Activated B cell treated with CpG ODN at 0.5 μM for 24 hours (primary cell): ENCODE measurements at regions of chr14 and their contacts with region 1.

Region 1: GRCh38 chr14:49620182-49621113 is at the starts of genes MGAT2 and RPL36AL:
- DNase-seq: peak; percentile 90
- ATAC-seq: peak; percentile 90
- H3K4me3 Mint-ChIP-seq: peak within 1 kb of the TSS; percentile 97
- H3K27ac Mint-ChIP-seq: peak within 1 kb of the TSS; percentile 97
- H3K4me1 Mint-ChIP-seq: peaks cover 61% of the 10 kb centered on the region
- H3K27me3 Mint-ChIP-seq: no peaks in the 10 kb centered on the region
- CTCF ChIP-seq: no peak
- total RNA-seq, gene MGAT2: 39.7 and 40.5 TPM in 2 replicates
- total RNA-seq, gene RPL36AL: 150 and 166 TPM in 2 replicates

Region 2: DNA sequence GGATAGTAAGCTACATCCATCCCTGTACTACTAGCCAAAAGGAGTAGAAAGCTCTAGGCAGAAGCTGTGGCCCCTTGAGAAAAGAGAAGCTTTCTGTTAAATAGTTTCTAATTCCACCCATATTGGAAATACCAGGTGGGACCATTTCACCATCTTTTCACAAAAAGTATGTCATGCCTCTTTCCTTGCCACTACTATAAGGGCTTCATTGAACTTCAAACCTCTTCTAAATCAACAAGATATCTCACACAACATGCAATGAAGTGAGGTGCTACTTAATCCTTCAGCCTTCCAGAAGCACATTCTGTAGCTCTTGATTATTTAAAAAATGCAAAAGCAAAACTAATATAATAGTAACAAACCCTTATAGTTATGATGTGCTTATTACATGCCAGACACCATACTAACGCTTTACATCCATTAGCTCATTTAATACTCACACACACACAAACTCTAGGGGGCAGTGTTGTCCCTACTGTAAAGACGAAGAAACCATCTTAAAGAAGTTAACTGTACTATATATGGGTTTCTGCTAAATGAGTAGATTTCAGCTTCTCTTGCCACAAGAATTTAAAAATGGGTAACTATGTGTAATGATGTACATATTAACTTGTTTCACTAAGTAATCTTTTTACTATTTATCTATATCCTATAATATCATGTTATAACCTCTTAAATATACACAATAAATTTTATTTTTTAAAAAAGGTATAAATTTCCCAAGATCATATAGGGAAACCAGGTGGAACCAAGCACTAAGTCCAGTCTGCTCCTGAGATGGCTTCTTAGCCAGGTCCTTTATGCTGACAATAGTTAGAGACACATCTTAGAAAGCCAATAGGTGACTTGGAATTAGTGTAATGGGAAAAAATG is 158.7 kb before region 1 on chr14:
- CTCF ChIA-PET with region 1: interaction called, 12 read pairs
- POLR2A ChIA-PET with region 1: interaction called, 6 read pairs
- intact Hi-C with region 1: no loop called
- DNase-seq: no peak
- ATAC-seq: peak; percentile 81
- H3K4me3 Mint-ChIP-seq: no peak overlapping the region
- H3K27ac Mint-ChIP-seq: no peak overlapping the region
- H3K4me1 Mint-ChIP-seq: no peaks in the 10 kb centered on the region
- H3K27me3 Mint-ChIP-seq: peaks cover 5% of the 10 kb centered on the region
- CTCF ChIP-seq: peak; percentile 62

Region 3: DNA sequence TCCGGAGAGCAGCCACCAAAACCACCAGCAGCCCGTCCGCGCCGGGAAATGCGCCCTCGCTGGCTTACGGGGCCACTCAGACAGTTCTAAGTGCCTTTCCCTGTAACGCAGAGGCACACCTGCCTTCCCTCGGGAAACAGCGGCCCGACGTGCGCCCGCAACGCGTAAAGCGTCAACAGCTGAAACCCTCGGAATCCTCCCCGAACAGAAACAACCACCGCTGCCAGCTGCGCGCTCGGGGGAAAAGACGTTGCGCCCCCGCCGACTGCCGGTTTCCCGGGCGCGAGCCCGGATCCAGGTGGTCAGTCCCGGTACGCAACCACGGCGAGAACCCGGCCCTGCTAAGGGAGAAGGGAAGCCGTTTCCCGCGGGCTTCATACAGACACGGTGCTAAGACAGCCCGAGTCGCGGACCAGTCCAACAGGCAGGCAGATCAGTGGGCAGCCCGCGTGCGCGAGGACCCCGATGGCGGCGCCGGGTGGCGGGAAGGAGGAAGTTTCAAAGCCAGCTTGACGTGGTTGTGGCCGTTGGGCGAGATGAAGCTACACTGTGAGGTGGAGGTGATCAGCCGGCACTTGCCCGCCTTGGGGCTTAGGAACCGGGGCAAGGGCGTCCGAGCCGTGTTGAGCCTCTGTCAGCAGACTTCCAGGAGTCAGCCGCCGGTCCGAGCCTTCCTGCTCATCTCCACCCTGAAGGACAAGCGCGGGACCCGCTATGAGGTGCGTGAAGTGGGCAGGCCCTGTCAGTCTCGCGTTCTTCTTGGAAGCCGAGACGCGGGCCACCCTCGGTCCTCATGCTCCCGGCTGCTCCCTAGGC is 21.8 kb before region 1 on chr14 and contains the start of gene LRR1:
- CTCF ChIA-PET with region 1: interaction called, 15 read pairs
- POLR2A ChIA-PET with region 1: interaction called, 293 read pairs
- intact Hi-C with region 1: loop called (anchors 1 kb)
- DNase-seq: peak; percentile 94
- ATAC-seq: peak; percentile 67
- H3K4me3 Mint-ChIP-seq: peak within 1 kb of the TSS; percentile 95
- H3K27ac Mint-ChIP-seq: peak within 1 kb of the TSS; percentile 96
- H3K4me1 Mint-ChIP-seq: peaks cover 60% of the 10 kb centered on the region
- H3K27me3 Mint-ChIP-seq: no peaks in the 10 kb centered on the region
- CTCF ChIP-seq: no peak
- total RNA-seq, gene LRR1: 15.1 and 19.9 TPM in 2 replicates

Region 4: DNA sequence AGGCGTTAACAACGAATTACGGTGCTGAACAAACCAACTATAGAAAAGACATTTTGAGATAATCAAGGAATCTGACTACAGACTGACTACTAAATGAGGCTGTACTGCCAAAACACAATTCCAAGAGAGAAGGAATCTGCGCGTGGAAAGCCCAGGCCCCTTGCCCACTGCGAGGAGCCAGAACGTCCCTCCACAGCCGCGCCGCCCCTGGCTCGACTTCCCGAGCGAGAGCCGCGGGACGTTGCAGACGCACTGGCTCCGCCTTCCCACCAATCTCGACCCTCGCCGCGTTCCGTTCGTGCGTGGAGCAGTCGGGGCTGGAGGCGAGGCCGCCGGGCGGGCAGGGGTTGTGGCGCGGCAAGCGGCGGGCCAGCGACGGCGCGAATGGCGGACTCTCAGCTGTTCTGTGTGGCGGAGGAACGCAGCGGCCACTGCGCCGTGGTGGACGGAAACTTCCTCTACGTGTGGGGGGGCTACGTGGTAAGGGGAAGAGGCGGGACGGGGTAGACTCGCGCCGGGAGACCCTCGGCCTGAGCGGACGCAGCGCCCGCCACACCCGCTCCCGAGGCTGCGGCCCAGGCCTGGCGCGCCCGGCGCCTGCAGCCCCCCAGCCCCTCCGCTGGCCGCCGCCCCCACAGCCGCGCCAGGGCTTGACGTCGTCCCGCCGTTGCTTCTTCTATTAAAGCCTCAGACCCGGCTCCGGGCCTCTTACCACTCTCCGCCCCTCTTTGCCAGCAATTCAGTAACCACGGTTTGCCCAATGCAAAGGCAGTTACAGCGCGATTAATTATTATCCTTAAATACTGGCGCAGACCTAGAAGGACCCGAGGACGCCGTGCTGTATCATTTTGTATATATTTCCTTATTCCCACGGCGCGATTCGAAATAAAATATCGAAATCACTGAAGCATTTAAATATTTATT is 72.6 kb after region 1 on chr14 and contains the start of gene KLHDC1:
- CTCF ChIA-PET with region 1: no interaction called
- POLR2A ChIA-PET with region 1: interaction called, 16 read pairs
- intact Hi-C with region 1: loop called (anchors 1 kb)
- DNase-seq: peak; percentile 74
- ATAC-seq: peak; percentile 80
- H3K4me3 Mint-ChIP-seq: peak within 1 kb of the TSS; percentile 83
- H3K27ac Mint-ChIP-seq: peak within 1 kb of the TSS; percentile 84
- H3K4me1 Mint-ChIP-seq: peaks cover 24% of the 10 kb centered on the region
- H3K27me3 Mint-ChIP-seq: no peaks in the 10 kb centered on the region
- CTCF ChIP-seq: no peak
- total RNA-seq, gene KLHDC1: 5.7 and 6.9 TPM in 2 replicates

Region 5: GRCh38 chr14:49767562-49768300 is 147.3 kb after region 1 on chr14 and contains the start of gene KLHDC2:
- CTCF ChIA-PET with region 1: interaction called, 3 read pairs
- POLR2A ChIA-PET with region 1: interaction called, 45 read pairs
- intact Hi-C with region 1: loop called (anchors 1 kb)
- DNase-seq: peak; percentile 86
- ATAC-seq: peak; percentile 88
- H3K4me3 Mint-ChIP-seq: peak within 1 kb of the TSS; percentile 97
- H3K27ac Mint-ChIP-seq: peak within 1 kb of the TSS; percentile 99
- H3K4me1 Mint-ChIP-seq: peaks cover 33% of the 10 kb centered on the region
- H3K27me3 Mint-ChIP-seq: no peaks in the 10 kb centered on the region
- CTCF ChIP-seq: no peak
- total RNA-seq, gene KLHDC2: 27.0 and 31.2 TPM in 2 replicates

Region 6: GRCh38 chr14:50231475-50232275 is 611.2 kb after region 1 on chr14 and contains the start of gene SOS2:
- CTCF ChIA-PET with region 1: no interaction called
- POLR2A ChIA-PET with region 1: no interaction called
- intact Hi-C with region 1: loop called (anchors 5 kb)
- DNase-seq: peak; percentile 87
- ATAC-seq: peak; percentile 87
- H3K4me3 Mint-ChIP-seq: peak within 1 kb of the TSS; percentile 93
- H3K27ac Mint-ChIP-seq: peak within 1 kb of the TSS; percentile 92
- H3K4me1 Mint-ChIP-seq: peaks cover 35% of the 10 kb centered on the region
- H3K27me3 Mint-ChIP-seq: no peaks in the 10 kb centered on the region
- CTCF ChIP-seq: no peak
- total RNA-seq, gene SOS2: 29.1 and 32.0 TPM in 2 replicates